Aorta (tissue), 5 donors: ENCODE measurements at regions of chr14 and their contacts with region 1.

Region 1: GRCh38 chr14:73886449-73887317 is at the start of gene ZNF410:
- DNase-seq: peak; percentile 97
- ATAC-seq: peak; percentile 99
- H3K4me3 ChIP-seq: peak within 1 kb of the TSS; percentile 82 to 98
- H3K27ac ChIP-seq: peak within 1 kb of the TSS; percentile 78 to 92
- H3K4me1 ChIP-seq: peaks cover 0 to 4% of the 10 kb centered on the region in 2 donors
- H3K27me3 ChIP-seq: no peaks in the 10 kb centered on the region
- total RNA-seq, gene ZNF410: 42.9 to 45.7 TPM

Region 2: GRCh38 chr14:73851644-73852382 is 34.9 kb before region 1 on chr14 and contains the start of gene PTGR2:
- intact Hi-C with region 1: loop called in 1 of 2 experiments (anchors 5 kb)
- DNase-seq: peak; percentile 98
- ATAC-seq: peak; percentile 99
- H3K4me3 ChIP-seq: peak within 1 kb of the TSS; percentile 44 to 63
- H3K27ac ChIP-seq: peak within 1 kb of the TSS; percentile 59 to 70
- H3K4me1 ChIP-seq: no peaks in the 10 kb centered on the region
- H3K27me3 ChIP-seq: no peaks in the 10 kb centered on the region
- total RNA-seq, gene PTGR2: 5.1 to 8.7 TPM

Region 3: GRCh38 chr14:73988065-73988464 is 101.4 kb after region 1 on chr14:
- intact Hi-C with region 1: no loop called
- DNase-seq: no peak
- ATAC-seq: no peak
- H3K4me3 ChIP-seq: no peak overlapping the region
- H3K27ac ChIP-seq: no peak overlapping the region
- H3K4me1 ChIP-seq: no peaks in the 10 kb centered on the region
- H3K27me3 ChIP-seq: no peaks in the 10 kb centered on the region